Ovary (tissue), 10 donors: ENCODE measurements at regions of chr17 and their contacts with region 1.

Region 1: DNA sequence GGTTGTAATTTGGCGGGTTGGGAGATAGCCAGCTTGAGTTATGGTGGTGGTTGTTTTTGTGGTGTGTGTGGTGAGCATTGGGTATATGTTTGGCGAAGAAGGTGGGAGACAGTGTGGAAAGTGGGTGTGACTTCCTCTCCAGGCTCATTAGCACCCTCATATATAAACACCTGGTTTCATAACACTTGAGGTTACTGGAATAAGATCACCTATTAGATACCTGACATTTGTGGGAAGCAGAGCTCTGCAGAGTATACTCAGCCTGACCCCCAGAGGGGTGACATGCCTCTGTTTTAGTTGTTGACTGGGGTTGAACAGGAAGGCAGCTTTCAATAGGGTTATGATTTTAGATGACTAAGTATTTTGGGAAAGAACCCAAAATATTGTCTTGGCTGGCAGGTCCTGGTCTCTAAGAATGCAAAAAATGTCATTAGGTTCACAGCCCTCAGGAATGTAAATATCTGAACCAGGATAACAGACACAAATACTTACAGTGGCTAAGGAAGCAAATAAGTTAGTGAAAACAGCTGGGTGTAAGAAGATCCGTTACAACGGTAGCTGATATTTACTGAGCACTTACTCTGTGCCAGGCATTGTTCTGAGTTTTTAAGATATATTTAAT is 18.3 kb upstream of the EFCAB13 start:
- DNase-seq: no peak
- H3K4me3 ChIP-seq: no peak overlapping the region
- H3K27ac ChIP-seq: no peak overlapping the region
- H3K4me1 ChIP-seq: peaks cover 7% of the 10 kb centered on the region
- H3K27me3 ChIP-seq: no peaks in the 10 kb centered on the region
- CTCF ChIP-seq: no peak
- EP300 ChIP-seq: no peak
- POLR2A ChIP-seq: no peak

Region 2: DNA sequence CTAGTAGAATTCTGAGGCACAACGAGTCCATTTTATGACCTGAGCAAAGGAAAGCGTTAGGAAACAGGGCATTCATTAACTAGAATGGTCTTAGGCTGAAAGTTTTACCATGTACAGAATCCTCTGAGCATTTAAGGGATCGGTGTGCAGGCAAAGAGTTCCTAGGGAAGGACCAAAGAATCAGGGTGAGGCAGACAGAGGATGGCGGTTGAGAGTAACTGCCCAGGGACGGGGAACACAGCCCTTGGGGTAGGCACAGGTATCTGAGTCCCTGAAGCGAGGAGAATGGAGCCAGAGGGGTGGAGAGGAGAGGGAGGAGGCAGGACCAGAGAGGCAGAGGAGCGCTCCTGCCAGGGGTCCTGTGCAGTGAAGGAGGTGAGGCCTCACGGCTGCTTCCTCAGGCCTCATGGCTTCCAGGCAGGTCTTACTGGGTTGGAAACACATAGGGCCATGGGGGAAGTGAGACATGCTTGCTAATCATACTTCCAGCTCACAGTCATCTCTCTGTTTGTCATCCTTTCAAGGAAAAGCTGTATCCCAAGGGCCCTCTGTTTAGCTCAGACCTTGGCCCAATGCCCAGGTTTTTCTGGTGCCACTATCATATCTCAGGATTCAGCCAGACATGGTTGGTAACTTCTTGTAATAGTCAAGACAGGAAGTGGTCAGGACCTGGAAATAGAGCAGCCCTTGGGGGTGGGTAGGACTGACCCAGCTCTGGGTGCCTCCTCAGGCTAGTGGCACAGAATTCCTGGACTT is 65.6 kb before region 1 on chr17:
- intact Hi-C with region 1: loop called in 2 of 4 experiments (anchors 5 kb)
- DNase-seq: peak in 4 of 5 donors; percentile 36 to 74 (median 55)
- H3K4me3 ChIP-seq: no peak overlapping the region
- H3K27ac ChIP-seq: peak overlapping the region in 1 of 2 donors; percentile 33
- H3K4me1 ChIP-seq: peaks cover 3% of the 10 kb centered on the region
- H3K27me3 ChIP-seq: no peaks in the 10 kb centered on the region
- CTCF ChIP-seq: no peak
- EP300 ChIP-seq: peak; percentile 77
- POLR2A ChIP-seq: no peak

Region 3: DNA sequence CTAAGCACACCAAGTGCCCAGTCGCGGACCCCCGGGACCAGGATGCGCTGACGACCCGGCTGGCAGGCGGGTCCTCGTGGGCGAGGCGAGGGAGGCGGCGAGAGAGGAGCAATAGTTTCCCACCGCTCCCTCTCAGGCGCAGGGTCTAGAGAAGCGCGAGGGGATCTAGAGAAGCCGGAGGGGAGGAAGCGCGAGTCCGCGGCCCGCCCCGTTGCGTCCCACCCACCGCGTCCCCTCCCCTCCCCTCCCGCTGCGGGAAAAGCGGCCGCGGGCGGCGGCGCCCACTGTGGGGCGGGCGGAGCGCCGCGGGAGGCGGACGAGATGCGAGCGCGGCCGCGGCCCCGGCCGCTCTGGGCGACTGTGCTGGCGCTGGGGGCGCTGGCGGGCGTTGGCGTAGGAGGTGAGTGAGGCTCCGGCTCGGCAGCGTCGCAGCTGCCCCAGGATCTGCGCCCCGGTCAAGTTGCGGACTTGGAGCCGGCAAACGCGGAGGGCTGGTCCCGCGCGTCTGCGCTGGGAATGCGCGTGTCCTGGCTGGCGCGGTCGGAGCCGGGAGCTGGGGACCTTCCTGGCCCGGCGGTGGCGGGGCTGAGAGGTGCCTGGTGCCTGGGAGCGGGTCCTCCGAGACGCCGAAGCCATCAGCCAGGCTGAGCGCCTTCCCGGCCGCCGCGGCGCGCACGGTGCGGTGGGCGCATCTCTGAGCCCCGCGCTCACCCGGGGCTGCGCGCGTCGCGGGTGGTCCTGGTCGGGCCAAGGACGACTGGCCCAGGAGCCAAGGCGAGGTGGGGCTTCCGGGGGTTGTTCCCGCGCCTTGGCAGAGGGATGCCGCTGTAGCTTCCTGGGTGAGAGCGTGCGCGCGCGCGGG is 51.6 kb before region 1 on chr17 and contains the start of gene ITGB3:
- intact Hi-C with region 1: loop called in 1 of 4 experiments (anchors 2 kb)
- DNase-seq: peak; percentile 68 to 83 (median 75)
- H3K4me3 ChIP-seq: peak within 1 kb of the TSS; percentile 52
- H3K27ac ChIP-seq: no peak within 1 kb of the TSS
- H3K4me1 ChIP-seq: no peaks in the 10 kb centered on the region
- H3K27me3 ChIP-seq: no peaks in the 10 kb centered on the region
- CTCF ChIP-seq: peak in 2 of 3 donors; percentile 40
- EP300 ChIP-seq: no peak
- POLR2A ChIP-seq: no peak
- total RNA-seq, gene ITGB3: 1.7 to 7.7 (median 2.9) TPM